Left ventricle myocardium superior (tissue), 1 donor: ENCODE measurements at regions of chr4 and their contacts with region 1.

Region 1: DNA sequence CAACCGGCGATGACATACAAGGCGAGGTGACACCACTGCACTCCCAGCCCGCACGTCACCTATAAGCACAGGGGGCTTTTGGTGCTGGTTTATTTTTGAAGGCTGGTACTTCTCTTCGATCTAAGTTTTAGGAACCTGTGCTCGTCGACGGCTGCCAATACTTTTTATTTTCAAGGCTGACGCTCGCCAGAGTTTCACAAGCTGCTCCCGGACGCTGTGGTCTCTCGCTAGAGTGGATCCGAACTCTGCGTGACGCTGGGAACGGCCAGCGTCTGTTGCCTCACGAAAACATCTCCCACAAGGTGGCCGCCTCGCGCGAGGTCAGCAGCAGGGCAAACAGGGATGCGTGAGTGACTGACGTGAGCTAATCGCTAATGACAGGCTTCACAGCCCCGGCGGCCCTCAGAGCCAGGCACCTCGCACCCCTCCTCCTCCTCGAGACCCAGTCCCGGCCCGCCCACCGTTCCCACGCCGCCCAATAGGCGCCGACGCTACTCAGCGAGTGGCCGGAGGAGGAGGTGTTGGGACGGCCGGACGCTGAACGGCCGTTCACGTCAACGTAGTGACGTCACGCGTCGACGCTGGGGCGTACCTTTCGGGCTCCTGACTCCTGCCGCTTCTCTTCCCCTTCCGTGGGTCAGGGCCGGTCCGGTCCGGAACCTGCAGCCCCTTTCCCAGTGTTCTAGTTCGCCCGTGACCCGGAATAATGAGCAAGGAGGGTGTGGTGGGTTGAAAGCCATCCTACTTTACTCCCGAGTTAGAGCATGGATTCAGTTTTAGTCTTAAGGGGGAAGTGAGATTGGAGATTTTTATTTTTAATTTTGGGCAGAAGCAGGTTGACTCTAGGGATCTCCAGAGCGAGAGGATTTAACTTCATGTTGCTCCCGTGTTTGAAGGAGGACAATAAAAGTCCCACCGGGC is at the start of gene CLCN3:
- DNase-seq: peak; percentile 99
- ATAC-seq: peak; percentile 98
- total RNA-seq, gene CLCN3: 65.9 TPM

Region 2: DNA sequence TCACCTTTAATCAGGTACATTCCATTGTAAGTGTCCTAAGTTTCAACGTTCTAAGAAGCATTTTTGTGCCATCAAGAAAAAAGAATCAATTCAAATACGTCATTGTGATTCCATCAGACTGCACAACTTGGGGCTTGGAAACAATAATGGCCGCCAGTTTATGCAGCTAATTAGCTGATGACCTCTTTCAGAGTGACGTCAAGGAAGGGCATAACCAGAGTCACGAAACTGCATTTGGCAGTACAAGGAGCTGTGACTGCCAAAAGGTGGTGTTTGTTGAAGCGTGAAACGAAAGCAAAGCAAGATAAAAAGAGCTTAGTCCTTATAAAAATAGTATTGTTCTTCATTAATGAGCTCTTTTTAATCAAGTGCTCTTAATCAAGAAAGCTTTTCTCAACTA is 268.4 kb before region 1 on chr4:
- intact Hi-C with region 1: no loop called
- DNase-seq: no peak
- ATAC-seq: peak; percentile 92

Region 3: DNA sequence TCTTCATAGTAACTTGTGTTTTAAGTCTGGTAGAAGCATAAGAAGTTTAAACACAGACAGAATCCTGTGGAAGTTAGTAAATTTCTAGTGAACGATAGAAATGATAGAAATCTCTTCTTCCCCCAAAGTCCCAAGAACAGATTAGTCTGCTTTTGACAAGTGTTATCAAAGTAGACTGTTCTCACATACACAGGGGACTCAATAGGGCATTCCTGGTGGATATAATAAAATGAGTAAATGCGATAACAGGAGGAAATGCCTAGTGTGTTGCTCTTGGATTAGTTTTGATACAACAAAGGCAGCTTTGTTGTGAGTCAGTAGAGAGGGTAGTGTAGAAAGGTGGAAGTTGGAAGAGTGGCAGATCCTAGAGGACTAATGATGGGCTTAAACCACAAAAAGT is 43.6 kb after region 1 on chr4:
- intact Hi-C with region 1: loop called (anchors 2 kb)
- DNase-seq: no peak
- ATAC-seq: no peak

Region 4: GRCh38 chr4:169716677-169717076 is 96.5 kb after region 1 on chr4:
- intact Hi-C with region 1: loop called (anchors 10 kb)
- DNase-seq: no peak
- ATAC-seq: no peak